ENCODE measurements at regions of chr12 and their contacts with region 1.

Region 1: DNA sequence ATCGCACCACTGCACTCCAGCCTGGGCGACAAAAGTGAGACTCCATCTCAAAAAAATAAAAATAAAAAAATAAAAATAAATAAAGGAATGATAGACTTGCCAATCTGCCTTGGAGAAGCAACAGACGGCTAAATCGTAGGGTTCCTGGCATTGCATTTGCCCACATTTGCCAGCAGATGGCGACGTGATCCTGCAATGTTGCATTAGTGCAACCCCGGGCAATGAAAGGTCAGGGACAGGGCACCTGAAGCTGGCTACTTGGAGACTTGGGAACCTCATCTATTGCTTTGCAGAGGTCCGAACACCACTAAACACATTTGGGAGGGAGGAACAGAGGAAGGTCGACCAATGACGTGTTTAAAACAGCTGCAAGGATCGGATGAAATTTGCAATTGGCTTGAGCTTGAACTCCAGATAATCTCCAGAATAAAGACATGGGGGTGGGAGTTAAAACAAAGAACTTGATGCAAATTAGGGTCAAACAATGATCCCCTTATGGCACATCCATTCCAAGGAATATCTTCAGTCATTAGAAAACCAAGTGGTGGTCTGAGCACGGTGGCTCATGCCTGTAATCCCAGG is 34.6 kb downstream of the SPRING1 start:
- DNase-seq: peak; percentile 26 to 80 (median 68)
- ATAC-seq: peak; percentile 71
- H3K4me3 ChIP-seq: no peak overlapping the region
- H3K4me3 Mint-ChIP-seq: no peak overlapping the region
- H3K27ac ChIP-seq: no peak overlapping the region
- H3K27ac Mint-ChIP-seq: no peak overlapping the region
- H3K4me1 ChIP-seq: no peaks in the 10 kb centered on the region
- H3K4me1 Mint-ChIP-seq: peaks cover 2% of the 10 kb centered on the region
- H3K27me3 ChIP-seq: peaks cover 0 to 2% of the 10 kb centered on the region in 2 experiments
- H3K27me3 Mint-ChIP-seq: peaks cover 6% of the 10 kb centered on the region
- CTCF ChIP-seq: peak; percentile 96

Region 2: DNA sequence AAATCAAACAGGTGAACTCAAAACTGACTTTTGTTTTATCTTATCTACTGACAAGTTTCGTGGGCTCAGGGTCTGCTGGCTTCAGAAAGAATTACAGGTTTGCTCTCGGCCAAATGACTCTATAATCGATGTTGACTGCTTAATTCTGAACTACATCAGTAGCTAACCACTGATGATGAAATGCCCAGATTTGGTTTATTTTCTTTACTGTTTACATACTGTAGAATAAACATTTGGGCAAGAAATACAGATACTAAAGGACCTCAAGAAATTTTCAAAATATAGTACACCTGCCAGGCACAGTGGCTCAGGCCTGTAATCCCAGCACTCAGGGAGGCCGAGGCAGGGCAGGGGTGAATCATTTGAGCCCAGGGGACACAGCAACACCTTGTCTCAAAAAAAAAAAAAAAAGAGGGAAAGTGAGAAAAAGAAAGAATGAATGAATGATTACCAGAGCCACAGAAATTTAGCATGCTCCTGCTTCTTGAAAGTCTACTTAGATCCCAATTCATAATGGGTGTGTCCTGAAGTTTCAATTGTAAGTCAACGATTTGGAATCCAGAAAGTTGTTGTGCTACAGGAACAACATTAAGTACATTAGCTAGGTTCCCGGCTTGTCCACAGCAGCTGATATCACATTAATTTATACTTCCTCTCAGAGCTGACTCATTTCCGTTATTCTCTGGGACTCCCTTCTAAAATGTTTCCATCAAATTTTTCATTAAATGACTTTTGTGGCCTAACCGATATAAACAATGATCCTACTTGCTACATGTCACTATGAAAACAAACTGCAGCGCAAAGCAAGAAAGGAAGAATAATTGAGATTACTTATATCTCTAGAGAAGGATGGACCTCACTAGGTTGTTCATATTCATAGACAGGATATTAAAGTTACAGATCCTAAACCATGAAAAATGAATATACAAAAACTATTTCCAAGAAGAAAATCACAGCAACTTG is 560.1 kb before region 1 on chr12:
- CTCF ChIA-PET with region 1: interaction called, 3 read pairs
- POLR2A ChIA-PET with region 1: interaction called, 4 read pairs
- intact Hi-C with region 1: loop called (anchors 10 kb)
- DNase-seq: peak in 1 of 9 experiments; percentile 29
- ATAC-seq: peak; percentile 34
- H3K4me3 ChIP-seq: no peak overlapping the region
- H3K4me3 Mint-ChIP-seq: peak overlapping the region; percentile 22
- H3K27ac ChIP-seq: no peak overlapping the region
- H3K27ac Mint-ChIP-seq: peak overlapping the region; percentile 74
- H3K4me1 ChIP-seq: peaks cover 9% of the 10 kb centered on the region
- H3K4me1 Mint-ChIP-seq: peaks cover 56% of the 10 kb centered on the region
- H3K27me3 ChIP-seq: no peaks in the 10 kb centered on the region
- H3K27me3 Mint-ChIP-seq: no peaks in the 10 kb centered on the region
- CTCF ChIP-seq: no peak

Region 3: DNA sequence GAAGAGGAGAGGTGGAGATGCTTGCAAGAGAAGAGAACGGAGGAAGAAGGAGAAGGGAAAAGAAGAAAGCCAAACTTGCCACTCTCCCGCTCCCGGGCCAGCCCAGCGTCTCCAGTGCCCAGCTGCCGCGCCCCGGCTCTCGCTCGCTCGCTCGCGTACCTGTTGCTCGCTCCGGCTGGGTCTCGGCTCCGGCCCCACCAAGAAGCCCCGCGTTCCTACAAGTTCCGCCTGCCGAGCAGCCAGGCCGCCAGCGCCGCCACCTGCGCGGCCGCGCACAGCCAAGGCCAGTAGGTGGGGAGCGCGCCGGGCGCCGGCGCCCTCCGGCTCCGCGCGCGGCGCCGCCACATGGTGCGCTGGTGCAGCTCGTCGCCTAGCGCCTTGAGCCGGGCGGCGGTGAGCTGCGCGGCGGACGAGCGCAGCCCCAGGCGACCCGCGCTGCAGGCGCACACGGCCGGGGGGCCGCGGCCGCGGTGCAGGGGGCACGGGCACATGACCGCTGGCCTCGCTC is 177.6 kb after region 1 on chr12:
- CTCF ChIA-PET with region 1: no interaction called
- POLR2A ChIA-PET with region 1: no interaction called
- intact Hi-C with region 1: loop called in 1 of 2 experiments (anchors 5 kb)
- DNase-seq: peak in 5 of 9 experiments; percentile 12 to 62 (median 44)
- ATAC-seq: peak; percentile 64
- H3K4me3 ChIP-seq: peak overlapping the region in 1 of 2 experiments; percentile 27
- H3K4me3 Mint-ChIP-seq: peak overlapping the region; percentile 78
- H3K27ac ChIP-seq: no peak overlapping the region
- H3K27ac Mint-ChIP-seq: no peak overlapping the region
- H3K4me1 ChIP-seq: peaks cover 37% of the 10 kb centered on the region
- H3K4me1 Mint-ChIP-seq: peaks cover 33% of the 10 kb centered on the region
- H3K27me3 ChIP-seq: peaks cover 29 to 30% of the 10 kb centered on the region in 2 experiments
- H3K27me3 Mint-ChIP-seq: peaks cover 65% of the 10 kb centered on the region
- CTCF ChIP-seq: no peak

Region 4: DNA sequence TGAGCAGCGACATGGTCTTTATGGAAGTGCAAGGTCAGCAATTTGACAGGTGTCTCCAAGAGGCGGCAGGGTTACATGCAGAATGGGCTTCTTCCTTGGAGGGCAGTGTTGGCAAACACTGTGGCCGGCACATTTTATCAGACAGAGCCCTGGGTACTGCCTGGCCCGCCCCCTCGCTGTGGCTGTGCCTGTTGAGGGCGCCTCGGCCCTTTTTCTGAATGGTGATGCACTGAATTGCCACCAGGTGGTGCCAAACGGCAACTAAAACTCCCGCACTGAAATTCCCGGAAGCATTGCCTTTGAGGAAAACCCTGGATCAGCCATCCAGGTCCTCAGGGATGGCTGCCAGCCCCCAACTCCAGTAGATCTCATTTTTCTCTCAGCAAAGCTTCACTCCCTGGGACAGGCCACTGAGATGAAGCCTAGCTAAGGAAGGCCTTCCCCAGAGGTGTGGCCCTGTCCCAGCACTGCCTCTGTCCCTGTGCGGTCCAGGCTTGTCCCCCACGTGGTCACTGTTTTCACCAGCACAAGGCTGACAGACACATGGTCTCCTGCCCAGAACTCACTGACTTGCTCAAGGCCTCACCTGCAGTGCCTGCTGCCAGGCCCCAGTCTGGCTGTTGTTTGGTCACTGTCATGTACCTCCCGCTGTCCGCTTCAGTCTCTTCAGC is 322.3 kb after region 1 on chr12:
- CTCF ChIA-PET with region 1: interaction called, 5 read pairs
- POLR2A ChIA-PET with region 1: no interaction called
- intact Hi-C with region 1: loop called (anchors 1 to 2 kb)
- DNase-seq: peak in 8 of 9 experiments; percentile 16 to 67 (median 48)
- ATAC-seq: peak; percentile 70
- H3K4me3 ChIP-seq: no peak overlapping the region
- H3K4me3 Mint-ChIP-seq: no peak overlapping the region
- H3K27ac ChIP-seq: no peak overlapping the region
- H3K27ac Mint-ChIP-seq: no peak overlapping the region
- H3K4me1 ChIP-seq: no peaks in the 10 kb centered on the region
- H3K4me1 Mint-ChIP-seq: no peaks in the 10 kb centered on the region
- H3K27me3 ChIP-seq: no peaks in the 10 kb centered on the region
- H3K27me3 Mint-ChIP-seq: no peaks in the 10 kb centered on the region
- CTCF ChIP-seq: peak; percentile 93

Region 5: DNA sequence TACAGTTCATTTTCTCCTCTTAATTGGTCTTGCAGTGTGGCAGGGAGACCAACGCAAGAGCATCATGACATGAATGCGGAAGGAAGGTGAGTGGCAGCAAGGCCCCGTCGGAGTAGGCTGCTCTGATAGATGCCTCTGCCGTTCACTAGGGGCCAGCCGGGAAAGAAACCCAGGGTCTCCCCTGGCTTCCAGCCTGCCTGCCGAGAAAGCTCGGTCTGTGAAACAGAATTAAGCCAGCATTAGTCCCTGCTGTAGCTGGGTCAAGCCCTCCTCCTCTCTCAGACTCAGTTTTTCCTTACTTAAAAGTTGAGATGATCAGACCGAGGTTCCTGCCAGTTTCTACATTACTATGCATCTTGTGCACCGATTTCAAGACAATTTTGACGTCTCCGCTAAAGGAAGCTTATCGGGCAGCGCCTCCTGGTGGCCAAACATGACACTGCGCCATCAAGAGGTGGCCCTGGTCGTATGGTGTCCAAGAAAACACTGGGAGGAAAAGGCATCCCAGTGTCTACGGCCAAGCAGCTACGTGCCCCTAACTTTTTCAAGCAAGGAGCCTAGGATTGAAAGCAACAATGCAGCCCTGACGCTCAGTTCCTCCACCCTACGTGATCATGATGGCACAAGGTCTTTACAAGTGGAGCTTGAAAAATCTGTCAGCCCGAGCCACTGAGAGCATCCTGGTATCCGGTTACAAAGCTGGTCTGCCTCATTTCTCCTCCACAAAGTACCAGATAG is 1133.9 kb after region 1 on chr12:
- CTCF ChIA-PET with region 1: no interaction called
- POLR2A ChIA-PET with region 1: no interaction called
- intact Hi-C with region 1: loop called in 1 of 2 experiments (anchors 5 kb)
- DNase-seq: peak; percentile 48 to 78 (median 66)
- ATAC-seq: peak; percentile 57
- H3K4me3 ChIP-seq: no peak overlapping the region
- H3K4me3 Mint-ChIP-seq: peak overlapping the region; percentile 33
- H3K27ac ChIP-seq: no peak overlapping the region
- H3K27ac Mint-ChIP-seq: no peak overlapping the region
- H3K4me1 ChIP-seq: no peaks in the 10 kb centered on the region
- H3K4me1 Mint-ChIP-seq: peaks cover 9% of the 10 kb centered on the region
- H3K27me3 ChIP-seq: no peaks in the 10 kb centered on the region
- H3K27me3 Mint-ChIP-seq: peaks cover 13% of the 10 kb centered on the region
- CTCF ChIP-seq: peak; percentile 87

Region 6: DNA sequence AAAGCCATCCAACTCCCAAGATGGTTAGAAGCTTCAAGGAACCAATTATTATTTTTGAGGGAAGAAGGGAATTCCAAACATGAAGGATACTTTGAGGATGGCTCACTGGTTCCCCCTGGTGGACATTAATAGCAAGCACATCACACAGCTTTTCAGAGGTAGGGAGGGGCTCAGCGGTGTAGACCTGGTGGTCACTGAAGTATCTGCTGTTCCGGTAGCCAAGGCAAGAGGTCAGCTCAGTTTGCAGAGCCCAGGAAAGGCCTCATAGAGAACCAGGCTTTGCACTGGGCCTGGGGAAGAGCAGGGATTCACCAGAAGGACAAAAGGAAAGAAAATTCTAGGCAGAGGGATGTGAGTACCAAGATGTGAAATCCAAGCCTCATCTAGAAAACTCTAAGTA is 1146.7 kb after region 1 on chr12:
- CTCF ChIA-PET with region 1: no interaction called
- POLR2A ChIA-PET with region 1: no interaction called
- intact Hi-C with region 1: no loop called
- DNase-seq: peak in 2 of 9 experiments; percentile 17 to 25
- ATAC-seq: peak; percentile 40
- H3K4me3 ChIP-seq: no peak overlapping the region
- H3K4me3 Mint-ChIP-seq: no peak overlapping the region
- H3K27ac ChIP-seq: no peak overlapping the region
- H3K27ac Mint-ChIP-seq: no peak overlapping the region
- H3K4me1 ChIP-seq: no peaks in the 10 kb centered on the region
- H3K4me1 Mint-ChIP-seq: no peaks in the 10 kb centered on the region
- H3K27me3 ChIP-seq: peaks cover 3% of the 10 kb centered on the region in 2 experiments
- H3K27me3 Mint-ChIP-seq: peaks cover 29% of the 10 kb centered on the region
- CTCF ChIP-seq: peak; percentile 67

Measured in CD8-positive, alpha-beta T cell (primary cell).